ENCODE measurements at regions of chr6 and their contacts with region 1.

Region 1: GRCh38 chr6:43667245-43668150 is 20.1 kb downstream of the MRPS18A start:
- DNase-seq: peak; percentile 85 to 94
- ATAC-seq: peak; percentile 78
- H3K4me3 ChIP-seq: no peak overlapping the region
- H3K27ac ChIP-seq: no peak overlapping the region
- H3K4me1 ChIP-seq: no peaks in the 10 kb centered on the region
- H3K27me3 ChIP-seq: no peaks in the 10 kb centered on the region

Region 2: DNA sequence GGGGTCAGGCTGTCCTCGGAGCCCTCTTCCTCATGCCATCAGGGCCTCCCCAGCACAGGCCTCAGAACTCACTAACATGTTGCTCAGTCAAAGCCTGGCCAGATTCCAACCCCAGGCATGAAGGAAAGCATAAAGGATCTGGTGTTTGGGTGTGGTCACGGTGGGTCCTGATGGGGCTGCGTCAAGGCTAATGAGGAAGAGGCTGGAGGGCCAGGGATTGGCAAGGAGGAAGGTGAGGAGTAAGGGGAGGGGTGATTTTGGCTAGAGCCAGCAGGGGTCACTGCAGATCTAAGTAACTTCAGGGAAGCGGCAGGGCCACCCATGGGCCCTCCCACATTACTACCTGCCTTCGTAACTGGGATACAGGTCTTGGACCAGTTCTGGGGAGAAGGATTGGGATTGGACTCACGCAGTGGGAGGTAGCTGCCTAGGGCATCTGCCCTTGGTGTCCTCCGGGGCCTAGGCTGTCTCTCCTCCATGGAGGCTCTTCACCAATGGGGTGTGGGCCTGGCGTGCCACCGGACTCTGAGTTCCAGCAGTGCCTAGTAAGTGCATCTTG is 56.3 kb after region 1 on chr6:
- intact Hi-C with region 1: loop called in 1 of 2 experiments (anchors 5 kb)
- DNase-seq: peak; percentile 70 to 81
- ATAC-seq: peak; percentile 65
- H3K4me3 ChIP-seq: no peak overlapping the region
- H3K27ac ChIP-seq: no peak overlapping the region
- H3K4me1 ChIP-seq: no peaks in the 10 kb centered on the region
- H3K27me3 ChIP-seq: no peaks in the 10 kb centered on the region

Region 3: DNA sequence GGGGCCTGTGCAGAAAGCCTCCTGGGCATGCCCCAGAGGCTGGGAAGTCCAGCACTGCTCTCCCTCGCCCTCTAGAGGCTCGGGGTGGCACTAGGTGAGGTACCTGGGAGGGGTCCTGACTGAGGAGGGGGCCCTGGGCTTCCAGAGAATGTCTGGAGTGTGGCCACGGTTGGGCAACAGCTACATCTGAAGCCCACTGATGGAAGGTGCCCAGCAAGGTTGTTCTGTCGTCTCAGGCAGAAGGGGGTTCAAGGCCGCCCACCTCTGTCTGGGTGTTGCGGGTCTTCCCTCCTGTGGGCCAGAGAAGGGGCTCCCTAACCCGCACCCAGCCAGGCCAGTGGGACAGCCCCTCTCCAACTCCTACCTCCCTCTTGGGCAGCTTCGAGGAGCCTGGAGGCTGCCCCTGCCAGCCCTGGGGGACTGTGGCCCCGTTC is 91.1 kb after region 1 on chr6:
- intact Hi-C with region 1: loop called in 1 of 2 experiments (anchors 5 kb)
- DNase-seq: peak; percentile 49 to 72
- ATAC-seq: no peak
- H3K4me3 ChIP-seq: no peak overlapping the region
- H3K27ac ChIP-seq: no peak overlapping the region
- H3K4me1 ChIP-seq: no peaks in the 10 kb centered on the region
- H3K27me3 ChIP-seq: no peaks in the 10 kb centered on the region

Region 4: DNA sequence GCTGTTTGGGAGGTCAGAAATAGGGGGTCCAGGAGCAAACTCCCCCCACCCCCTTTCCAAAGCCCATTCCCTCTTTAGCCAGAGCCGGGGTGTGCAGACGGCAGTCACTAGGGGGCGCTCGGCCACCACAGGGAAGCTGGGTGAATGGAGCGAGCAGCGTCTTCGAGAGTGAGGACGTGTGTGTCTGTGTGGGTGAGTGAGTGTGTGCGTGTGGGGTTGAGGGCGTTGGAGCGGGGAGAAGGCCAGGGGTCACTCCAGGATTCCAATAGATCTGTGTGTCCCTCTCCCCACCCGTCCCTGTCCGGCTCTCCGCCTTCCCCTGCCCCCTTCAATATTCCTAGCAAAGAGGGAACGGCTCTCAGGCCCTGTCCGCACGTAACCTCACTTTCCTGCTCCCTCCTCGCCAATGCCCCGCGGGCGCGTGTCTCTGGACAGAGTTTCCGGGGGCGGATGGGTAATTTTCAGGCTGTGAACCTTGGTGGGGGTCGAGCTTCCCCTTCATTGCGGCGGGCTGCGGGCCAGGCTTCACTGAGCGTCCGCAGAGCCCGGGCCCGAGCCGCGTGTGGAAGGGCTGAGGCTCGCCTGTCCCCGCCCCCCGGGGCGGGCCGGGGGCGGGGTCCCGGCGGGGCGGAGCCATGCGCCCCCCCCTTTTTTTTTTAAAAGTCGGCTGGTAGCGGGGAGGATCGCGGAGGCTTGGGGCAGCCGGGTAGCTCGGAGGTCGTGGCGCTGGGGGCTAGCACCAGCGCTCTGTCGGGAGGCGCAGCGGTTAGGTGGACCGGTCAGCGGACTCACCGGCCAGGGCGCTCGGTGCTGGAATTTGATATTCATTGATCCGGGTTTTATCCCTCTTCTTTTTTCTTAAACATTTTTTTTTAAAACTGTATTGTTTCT is 102.3 kb after region 1 on chr6 and contains the start of gene VEGFA:
- intact Hi-C with region 1: loop called in 1 of 2 experiments (anchors 2 kb)
- DNase-seq: peak; percentile 95 to 97
- ATAC-seq: peak; percentile 91
- H3K4me3 ChIP-seq: peak within 1 kb of the TSS; percentile 68 to 87
- H3K27ac ChIP-seq: peak within 1 kb of the TSS in 1 of 2 donors; percentile 58
- H3K4me1 ChIP-seq: no peaks in the 10 kb centered on the region
- H3K27me3 ChIP-seq: peaks cover 0 to 1% of the 10 kb centered on the region in 2 donors
- total RNA-seq, gene VEGFA: 107 to 247 TPM

Measured in aorta (tissue), 5 donors.